Activated CD4-positive, alpha-beta memory T cell treated with anti-CD3 and anti-CD28 coated beads for 36 hours (primary cell): ENCODE measurements at regions of chr1 and their contacts with region 1.

Region 1: GRCh38 chr1:113072757-113073478 is at the start of gene LRIG2:
- DNase-seq: peak; percentile 99
- H3K4me3 Mint-ChIP-seq: peak within 1 kb of the TSS; percentile 98
- H3K27ac Mint-ChIP-seq: peak within 1 kb of the TSS; percentile 91
- H3K4me1 Mint-ChIP-seq: peaks cover 30% of the 10 kb centered on the region
- H3K27me3 Mint-ChIP-seq: no peaks in the 10 kb centered on the region
- total RNA-seq, gene LRIG2: 7.1 to 8.3 TPM

Region 2: GRCh38 chr1:112809253-112809684 is 263.6 kb before region 1 on chr1:
- CTCF ChIA-PET with region 1: interaction called, 16 read pairs
- POLR2A ChIA-PET with region 1: no interaction called
- intact Hi-C with region 1: loop called (anchors 2 kb)
- DNase-seq: peak; percentile 81
- H3K4me3 Mint-ChIP-seq: no peak overlapping the region
- H3K27ac Mint-ChIP-seq: no peak overlapping the region
- H3K4me1 Mint-ChIP-seq: peaks cover 2% of the 10 kb centered on the region
- H3K27me3 Mint-ChIP-seq: no peaks in the 10 kb centered on the region

Region 3: GRCh38 chr1:112955781-112956543 is 117.0 kb before region 1 on chr1 and contains the start of gene SLC16A1:
- CTCF ChIA-PET with region 1: interaction called, 26 read pairs
- POLR2A ChIA-PET with region 1: interaction called, 8 read pairs
- intact Hi-C with region 1: loop called (anchors 2 kb)
- DNase-seq: peak; percentile 92
- H3K4me3 Mint-ChIP-seq: peak within 1 kb of the TSS; percentile 98
- H3K27ac Mint-ChIP-seq: peak within 1 kb of the TSS; percentile 97
- H3K4me1 Mint-ChIP-seq: peaks cover 58% of the 10 kb centered on the region
- H3K27me3 Mint-ChIP-seq: no peaks in the 10 kb centered on the region
- total RNA-seq, gene SLC16A1: 48.7 to 53.3 TPM

Region 4: DNA sequence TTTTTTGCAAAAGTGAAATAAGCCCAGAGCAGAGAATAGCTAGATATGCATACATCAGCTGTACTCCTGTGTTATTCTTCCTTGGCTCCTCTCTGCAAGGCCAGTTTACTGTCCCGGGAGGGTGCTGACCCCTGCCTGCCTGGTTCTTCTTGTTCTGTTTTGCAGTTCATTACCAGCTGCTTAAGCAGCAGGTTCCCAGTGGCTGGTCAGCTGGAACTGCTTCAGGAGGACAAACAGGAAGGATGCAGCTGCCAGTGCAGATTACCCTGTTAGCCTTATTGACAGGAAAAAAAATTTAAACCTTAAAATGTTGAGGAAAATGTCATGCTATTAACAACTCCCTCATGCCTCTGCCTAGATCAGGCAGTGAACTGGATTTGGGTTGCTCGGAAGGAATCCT is 15.9 kb before region 1 on chr1:
- CTCF ChIA-PET with region 1: interaction called, 34 read pairs
- POLR2A ChIA-PET with region 1: no interaction called
- intact Hi-C with region 1: no loop called
- DNase-seq: no peak
- H3K4me3 Mint-ChIP-seq: no peak overlapping the region
- H3K27ac Mint-ChIP-seq: no peak overlapping the region
- H3K4me1 Mint-ChIP-seq: no peaks in the 10 kb centered on the region
- H3K27me3 Mint-ChIP-seq: no peaks in the 10 kb centered on the region

Region 5: DNA sequence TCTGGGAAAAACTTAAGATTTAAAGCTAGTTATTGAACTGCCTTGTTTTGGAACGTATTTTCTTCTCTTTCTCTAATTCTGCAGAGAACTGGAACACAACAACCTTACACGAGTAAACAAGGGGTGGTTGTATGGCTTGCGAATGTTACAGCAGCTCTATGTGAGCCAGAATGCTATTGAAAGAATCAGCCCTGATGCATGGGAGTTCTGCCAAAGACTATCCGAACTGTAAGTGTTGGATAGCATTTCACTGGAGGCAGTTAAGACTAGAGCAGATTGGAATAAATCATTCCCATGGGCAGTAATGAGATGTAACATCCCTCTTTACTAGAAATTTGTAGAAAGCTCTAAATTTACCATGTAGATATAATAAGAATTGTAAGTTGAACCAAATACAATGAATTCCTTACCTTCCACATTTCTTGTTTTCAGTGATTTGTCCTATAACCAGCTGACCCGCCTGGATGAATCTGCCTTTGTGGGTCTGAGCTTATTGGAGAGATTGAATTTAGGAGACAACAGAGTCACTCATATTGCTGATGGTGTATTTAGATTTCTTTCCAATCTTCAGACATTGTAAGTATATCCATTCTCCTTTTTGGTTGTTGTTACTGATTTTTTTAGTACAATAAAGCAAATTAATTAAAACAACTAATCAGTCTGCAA is 23.0 kb after region 1 on chr1:
- CTCF ChIA-PET with region 1: interaction called, 31 read pairs
- POLR2A ChIA-PET with region 1: no interaction called
- intact Hi-C with region 1: no loop called
- DNase-seq: no peak
- H3K4me3 Mint-ChIP-seq: no peak overlapping the region
- H3K27ac Mint-ChIP-seq: peak overlapping the region; percentile 6
- H3K4me1 Mint-ChIP-seq: peaks cover 7% of the 10 kb centered on the region
- H3K27me3 Mint-ChIP-seq: no peaks in the 10 kb centered on the region

Region 6: DNA sequence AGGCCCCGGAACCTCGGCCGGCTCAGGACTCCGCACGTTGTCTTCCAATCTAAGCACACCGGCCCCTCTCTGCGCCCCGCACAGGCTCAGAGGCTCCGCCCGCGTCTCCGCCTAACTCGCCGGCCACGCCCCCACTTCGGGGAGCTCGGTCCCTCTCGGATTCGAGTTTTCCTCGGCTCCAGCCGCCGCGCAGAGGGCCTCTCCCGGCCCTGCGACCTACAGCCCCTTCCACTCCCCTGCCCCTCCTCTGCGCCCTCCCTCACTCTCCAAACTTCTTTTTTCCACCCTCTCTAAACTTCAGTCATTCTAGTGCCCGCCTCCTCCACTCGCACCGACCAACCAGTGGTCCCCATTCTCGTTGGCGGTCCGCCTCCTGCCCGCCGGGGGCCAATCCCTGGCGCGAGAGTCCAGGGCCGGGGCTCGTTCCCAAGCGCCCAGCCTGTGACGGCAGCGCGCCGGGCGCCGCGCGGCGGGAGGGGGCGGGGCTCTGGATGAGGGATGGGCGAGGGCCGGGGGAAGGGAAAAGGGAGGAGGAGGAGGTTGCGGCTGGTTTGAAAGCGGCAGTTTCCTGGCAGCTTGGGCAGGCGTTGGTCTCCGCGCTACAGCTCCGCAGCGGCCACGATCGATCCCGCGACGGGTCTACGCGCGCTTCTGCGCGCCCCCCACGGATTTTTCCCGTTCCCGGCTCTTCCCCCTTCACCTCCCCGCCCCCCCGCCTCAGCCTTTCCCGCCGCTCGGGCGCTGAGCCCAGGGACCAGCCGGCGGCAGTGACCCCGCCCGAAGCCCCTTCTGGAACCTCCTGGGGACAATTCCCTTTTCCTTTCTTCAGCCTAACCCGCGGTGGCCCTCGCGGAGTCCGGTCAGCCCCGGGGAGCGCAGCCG is 317.3 kb after region 1 on chr1 and contains the start of gene MAGI3:
- CTCF ChIA-PET with region 1: interaction called, 6 read pairs
- POLR2A ChIA-PET with region 1: interaction called, 3 read pairs
- intact Hi-C with region 1: loop called (anchors 5 kb)
- DNase-seq: peak; percentile 97
- H3K4me3 Mint-ChIP-seq: peak within 1 kb of the TSS; percentile 92
- H3K27ac Mint-ChIP-seq: peak within 1 kb of the TSS; percentile 77
- H3K4me1 Mint-ChIP-seq: peaks cover 24% of the 10 kb centered on the region
- H3K27me3 Mint-ChIP-seq: no peaks in the 10 kb centered on the region
- total RNA-seq, gene MAGI3: 7.3 to 7.4 TPM